ENCODE measurements at regions of chr15 and their contacts with region 1.

Region 1: GRCh38 chr15:42826251-42826890 is 89.4 kb upstream of the CDAN1 start:
- DNase-seq: peak; percentile 41
- H3K4me3 Mint-ChIP-seq: peak overlapping the region; percentile 10
- H3K27ac Mint-ChIP-seq: peak overlapping the region; percentile 95
- H3K4me1 Mint-ChIP-seq: peaks cover 11% of the 10 kb centered on the region
- H3K27me3 Mint-ChIP-seq: no peaks in the 10 kb centered on the region
- CTCF ChIP-seq: no peak

Region 2: GRCh38 chr15:42808913-42809312 is 17.5 kb before region 1 on chr15:
- CTCF ChIA-PET with region 1: interaction called, 4 read pairs
- POLR2A ChIA-PET with region 1: interaction called, 11 read pairs
- intact Hi-C with region 1: no loop called
- DNase-seq: no peak
- H3K4me3 Mint-ChIP-seq: no peak overlapping the region
- H3K27ac Mint-ChIP-seq: no peak overlapping the region
- H3K4me1 Mint-ChIP-seq: no peaks in the 10 kb centered on the region
- H3K27me3 Mint-ChIP-seq: no peaks in the 10 kb centered on the region
- CTCF ChIP-seq: no peak

Region 3: GRCh38 chr15:42876224-42876623 is 49.9 kb after region 1 on chr15:
- CTCF ChIA-PET with region 1: no interaction called
- POLR2A ChIA-PET with region 1: no interaction called
- intact Hi-C with region 1: no loop called
- DNase-seq: no peak
- H3K4me3 Mint-ChIP-seq: no peak overlapping the region
- H3K27ac Mint-ChIP-seq: no peak overlapping the region
- H3K4me1 Mint-ChIP-seq: peaks cover 6% of the 10 kb centered on the region
- H3K27me3 Mint-ChIP-seq: no peaks in the 10 kb centered on the region
- CTCF ChIP-seq: no peak

Region 4: DNA sequence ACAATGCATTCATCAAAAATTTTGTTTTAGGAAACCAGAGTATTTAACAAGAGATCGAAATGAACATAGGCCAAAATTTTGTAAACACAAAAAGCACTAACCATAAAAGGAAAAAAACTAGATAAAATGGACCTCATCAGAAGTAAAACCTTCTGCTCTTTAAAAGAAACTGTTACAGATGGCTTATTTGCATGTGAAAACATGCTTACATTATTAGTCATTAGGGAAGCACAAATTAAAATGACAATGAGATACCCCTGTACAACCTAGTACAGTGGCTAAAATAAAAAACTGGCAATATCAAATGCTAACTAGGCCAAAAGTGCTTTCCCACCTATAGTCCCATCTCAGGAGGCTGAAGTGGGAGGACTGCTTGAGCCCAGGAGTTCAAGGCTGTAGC is 260.2 kb after region 1 on chr15:
- CTCF ChIA-PET with region 1: no interaction called
- POLR2A ChIA-PET with region 1: no interaction called
- intact Hi-C with region 1: no loop called
- DNase-seq: no peak
- H3K4me3 Mint-ChIP-seq: no peak overlapping the region
- H3K27ac Mint-ChIP-seq: no peak overlapping the region
- H3K4me1 Mint-ChIP-seq: peaks cover 12% of the 10 kb centered on the region
- H3K27me3 Mint-ChIP-seq: no peaks in the 10 kb centered on the region
- CTCF ChIP-seq: no peak